Sigmoid colon (tissue), 7 donors: ENCODE measurements at regions of chr4 and their contacts with region 1.

Region 1: DNA sequence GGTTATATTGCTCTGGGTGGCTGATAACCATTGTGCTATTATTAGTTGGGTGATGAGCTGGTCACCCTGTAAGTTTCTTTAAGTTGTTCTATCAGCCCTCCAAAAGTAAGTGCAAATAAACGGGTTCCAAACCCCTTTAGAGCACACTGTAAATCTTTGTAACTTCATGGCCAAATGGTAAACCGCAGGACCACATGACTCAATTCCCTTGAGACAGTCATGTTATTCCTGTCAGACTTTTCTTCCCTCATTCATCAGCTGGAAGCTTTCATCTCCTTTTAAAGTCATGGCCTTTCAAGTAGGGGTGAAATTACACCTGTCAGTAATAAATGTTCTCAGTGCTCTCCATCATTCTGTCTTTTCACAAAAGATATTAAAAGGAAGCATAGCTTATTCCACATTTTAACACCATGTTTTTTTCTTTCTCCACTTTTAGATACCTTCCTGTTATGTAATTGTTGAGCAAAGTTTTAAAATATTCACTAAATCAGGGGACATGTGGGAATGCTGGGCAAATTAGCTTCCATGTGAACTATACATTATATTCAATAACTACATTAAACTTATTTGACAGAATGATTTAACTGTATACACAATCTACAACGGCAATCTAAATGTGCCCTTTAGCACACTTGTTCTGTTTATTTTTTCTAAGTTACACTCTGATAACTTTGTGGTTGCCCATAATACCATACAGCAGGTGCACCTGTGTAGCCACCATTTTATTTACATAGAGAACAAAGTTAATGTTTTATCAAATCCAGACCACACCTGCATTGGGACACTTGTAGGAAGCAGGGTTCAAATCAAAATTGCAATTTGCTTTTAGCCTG is 275.5 kb downstream of the CFAP299 start:
- DNase-seq: no peak
- H3K4me3 ChIP-seq: no peak overlapping the region
- H3K27ac ChIP-seq: no peak overlapping the region
- H3K4me1 ChIP-seq: peaks cover 0 to 28% (median 8%) of the 10 kb centered on the region in 4 donors
- H3K27me3 ChIP-seq: no peaks in the 10 kb centered on the region
- CTCF ChIP-seq: no peak
- EP300 ChIP-seq: no peak
- POLR2A ChIP-seq: no peak

Region 2: GRCh38 chr4:80713409-80713808 is 102.3 kb after region 1 on chr4:
- intact Hi-C with region 1: loop called (anchors 10 kb)
- DNase-seq: peak; percentile 76
- H3K4me3 ChIP-seq: no peak overlapping the region
- H3K27ac ChIP-seq: peak overlapping the region in 3 of 4 donors; percentile 57 to 74 (median 70)
- H3K4me1 ChIP-seq: peaks cover 0 to 62% (median 48%) of the 10 kb centered on the region in 4 donors
- H3K27me3 ChIP-seq: no peaks in the 10 kb centered on the region
- CTCF ChIP-seq: no peak
- EP300 ChIP-seq: no peak
- POLR2A ChIP-seq: no peak